CD4-positive, alpha-beta memory T cell (primary cell): ENCODE measurements at regions of chr16 and their contacts with region 1.

Region 1: GRCh38 chr16:684067-684794 is at the start of gene JMJD8:
- DNase-seq: peak; percentile 93 to 96 (median 94)
- H3K4me3 ChIP-seq: peak within 1 kb of the TSS in 1 of 2 donors; percentile 62
- H3K4me3 Mint-ChIP-seq: peak within 1 kb of the TSS; percentile 66 to 86 (median 77)
- H3K27ac ChIP-seq: peak within 1 kb of the TSS; percentile 70
- H3K27ac Mint-ChIP-seq: peak within 1 kb of the TSS; percentile 42 to 91 (median 85)
- H3K4me1 ChIP-seq: peaks cover 58% of the 10 kb centered on the region
- H3K4me1 Mint-ChIP-seq: peaks cover 6 to 44% (median 27%) of the 10 kb centered on the region in 4 donors
- H3K27me3 ChIP-seq: no peaks in the 10 kb centered on the region
- H3K27me3 Mint-ChIP-seq: no peaks in the 10 kb centered on the region
- total RNA-seq, gene JMJD8: 45.0 to 49.0 TPM

Region 2: GRCh38 chr16:636206-637080 is 47.8 kb before region 1 on chr16 and contains the start of gene METTL26:
- CTCF ChIA-PET with region 1: no interaction called
- POLR2A ChIA-PET with region 1: interaction called, 14 read pairs
- intact Hi-C with region 1: loop called (anchors 2 kb)
- DNase-seq: peak; percentile 92 to 95 (median 93)
- H3K4me3 ChIP-seq: peak within 1 kb of the TSS; percentile 81 to 86
- H3K4me3 Mint-ChIP-seq: peak within 1 kb of the TSS; percentile 95 to 100 (median 98)
- H3K27ac ChIP-seq: peak within 1 kb of the TSS; percentile 76
- H3K27ac Mint-ChIP-seq: peak within 1 kb of the TSS; percentile 94 to 100 (median 99)
- H3K4me1 ChIP-seq: peaks cover 21% of the 10 kb centered on the region
- H3K4me1 Mint-ChIP-seq: peaks cover 0 to 10% (median 5%) of the 10 kb centered on the region in 4 donors
- H3K27me3 ChIP-seq: no peaks in the 10 kb centered on the region
- H3K27me3 Mint-ChIP-seq: peaks cover 0 to 3% of the 10 kb centered on the region in 2 donors
- total RNA-seq, gene METTL26: 68.4 to 74.1 TPM